ENCODE measurements at regions of chr1 and their contacts with region 1.

Region 1: GRCh38 chr1:66764994-66765578 is 12.8 kb downstream of the DYNLT5 start:
- DNase-seq: no peak
- ATAC-seq: peak; percentile 80
- H3K4me3 ChIP-seq: no peak overlapping the region
- H3K27ac ChIP-seq: no peak overlapping the region
- H3K4me1 ChIP-seq: no peaks in the 10 kb centered on the region
- H3K27me3 ChIP-seq: no peaks in the 10 kb centered on the region
- CTCF ChIP-seq: peak; percentile 50 to 75 (median 69)
- EP300 ChIP-seq: no peak
- POLR2A ChIP-seq: no peak
- RAD21 ChIP-seq: peak; percentile 85

Region 2: DNA sequence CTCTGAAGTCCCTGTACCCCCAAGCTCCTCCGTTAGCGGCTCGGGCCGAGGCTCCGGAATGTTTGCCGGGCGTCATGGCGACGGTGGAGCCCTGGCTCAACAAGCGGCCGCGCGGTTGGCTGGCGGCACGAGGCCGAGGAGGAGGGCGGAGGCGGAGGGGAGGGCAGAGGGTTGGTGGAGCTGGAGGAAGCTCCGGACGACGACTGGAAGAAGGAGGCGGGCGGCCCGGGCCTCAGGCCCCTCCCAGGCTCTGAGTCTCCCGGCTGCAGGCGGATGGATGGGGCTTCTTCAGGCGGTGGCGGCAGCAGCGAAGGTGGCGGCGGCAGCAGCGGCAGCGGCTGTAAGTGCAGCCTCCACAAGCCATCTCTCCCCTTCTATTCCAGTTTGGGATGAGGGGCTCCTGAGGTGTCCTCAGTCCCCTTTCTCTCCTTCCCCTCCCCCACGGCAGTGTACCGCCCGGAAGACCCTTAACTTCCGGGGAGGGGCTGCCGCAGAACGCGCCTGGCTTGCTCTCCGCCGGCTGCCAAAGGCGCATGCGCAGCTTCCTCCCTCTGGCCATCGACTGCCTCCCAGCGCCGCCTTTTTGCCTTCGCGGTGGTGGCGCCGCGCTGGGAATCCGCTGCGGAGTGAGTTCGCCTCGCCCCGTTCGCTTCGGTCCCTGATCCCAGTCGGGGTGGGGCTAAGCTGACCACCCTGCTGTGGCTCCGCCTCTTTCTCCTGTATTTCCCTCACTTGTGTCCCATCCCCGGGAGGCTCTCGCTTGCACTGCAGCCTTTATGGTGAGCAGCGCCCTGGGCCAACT is 159.9 kb after region 1 on chr1 and contains the starts of genes DNAI4 and MIER1:
- CTCF ChIA-PET with region 1: interaction called, 4 read pairs
- POLR2A ChIA-PET with region 1: no interaction called
- RAD21 ChIA-PET with region 1: no interaction called
- SMC1A ChIA-PET with region 1: no interaction called
- in situ Hi-C with region 1: no loop called
- intact Hi-C with region 1: loop called (anchors 5 kb)
- DNase-seq: peak; percentile 87
- ATAC-seq: peak; percentile 96
- H3K4me3 ChIP-seq: peak within 1 kb of the TSS; percentile 79
- H3K27ac ChIP-seq: peak within 1 kb of the TSS; percentile 83
- H3K4me1 ChIP-seq: peaks cover 10% of the 10 kb centered on the region; the same call in 1 of the 2 replicates
- H3K27me3 ChIP-seq: no peaks in the 10 kb centered on the region
- CTCF ChIP-seq: peak; percentile 14 to 30 (median 21); a peak in 3 of 6 replicates
- EP300 ChIP-seq: no peak
- POLR2A ChIP-seq: peak; percentile 85
- RAD21 ChIP-seq: no peak
- polyA plus RNA-seq, gene DNAI4: 0.15 to 0.21 TPM
- polyA plus RNA-seq, gene MIER1: 16.1 to 24.6 TPM

Region 3: GRCh38 chr1:66996018-66996682 is 231.1 kb after region 1 on chr1:
- CTCF ChIA-PET with region 1: interaction called, 26 read pairs
- POLR2A ChIA-PET with region 1: no interaction called
- RAD21 ChIA-PET with region 1: interaction called, 7 read pairs
- SMC1A ChIA-PET with region 1: interaction called, 10 read pairs
- in situ Hi-C with region 1: no loop called
- intact Hi-C with region 1: no loop called
- DNase-seq: peak; percentile 59
- ATAC-seq: peak; percentile 89
- H3K4me3 ChIP-seq: no peak overlapping the region
- H3K27ac ChIP-seq: no peak overlapping the region
- H3K4me1 ChIP-seq: no peaks in the 10 kb centered on the region
- H3K27me3 ChIP-seq: no peaks in the 10 kb centered on the region
- CTCF ChIP-seq: peak; percentile 76 to 85 (median 81)
- EP300 ChIP-seq: no peak
- POLR2A ChIP-seq: no peak
- RAD21 ChIP-seq: peak; percentile 94

Region 4: DNA sequence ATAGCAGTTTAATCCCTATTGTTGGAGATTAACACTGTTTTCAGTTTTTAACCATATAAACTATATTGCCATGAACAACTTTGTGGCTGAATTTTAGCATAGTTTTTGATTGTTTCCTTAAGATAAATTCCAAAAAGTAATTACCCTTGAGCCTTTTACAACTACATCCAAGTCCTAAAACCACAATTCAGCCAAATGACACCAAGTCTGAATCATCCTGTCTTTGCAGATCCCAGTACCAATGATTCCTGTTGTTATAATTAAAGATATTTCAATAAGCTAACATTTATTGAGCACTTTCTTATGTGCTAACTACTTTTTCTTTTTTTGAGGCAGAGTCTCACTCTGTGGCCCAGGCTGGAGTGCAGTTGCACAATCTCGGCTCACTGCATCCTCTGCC is 436.8 kb after region 1 on chr1:
- CTCF ChIA-PET with region 1: no interaction called
- POLR2A ChIA-PET with region 1: interaction called, 11 read pairs
- RAD21 ChIA-PET with region 1: no interaction called
- SMC1A ChIA-PET with region 1: no interaction called
- in situ Hi-C with region 1: no loop called
- intact Hi-C with region 1: no loop called
- DNase-seq: no peak
- ATAC-seq: no peak
- H3K4me3 ChIP-seq: no peak overlapping the region
- H3K27ac ChIP-seq: no peak overlapping the region
- H3K4me1 ChIP-seq: no peaks in the 10 kb centered on the region
- H3K27me3 ChIP-seq: no peaks in the 10 kb centered on the region
- CTCF ChIP-seq: no peak
- EP300 ChIP-seq: no peak
- POLR2A ChIP-seq: no peak
- RAD21 ChIP-seq: no peak

Region 5: DNA sequence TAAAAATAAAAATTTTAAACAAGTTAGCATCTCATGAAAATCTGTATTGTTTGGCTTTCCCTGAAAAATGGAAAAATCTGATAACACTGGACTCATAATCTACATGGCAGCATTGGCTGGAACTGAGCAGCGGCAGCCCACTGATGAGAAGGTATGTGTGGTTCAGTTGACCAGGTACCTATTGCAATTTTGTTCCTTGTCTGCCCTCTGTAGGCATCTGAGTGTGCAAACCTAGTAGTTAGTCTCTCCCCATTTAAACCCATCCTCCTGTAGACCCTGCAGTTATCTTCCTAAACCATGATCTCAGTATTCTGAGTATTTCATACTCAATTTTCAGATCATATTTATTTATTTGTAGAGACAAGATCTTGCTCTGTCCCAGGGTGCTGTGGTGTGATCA is 724.6 kb after region 1 on chr1:
- CTCF ChIA-PET with region 1: no interaction called
- POLR2A ChIA-PET with region 1: no interaction called
- RAD21 ChIA-PET with region 1: no interaction called
- SMC1A ChIA-PET with region 1: no interaction called
- in situ Hi-C with region 1: loop called (anchors 25 kb)
- intact Hi-C with region 1: no loop called
- DNase-seq: peak; percentile 0
- ATAC-seq: peak; percentile 81
- H3K4me3 ChIP-seq: no peak overlapping the region
- H3K27ac ChIP-seq: no peak overlapping the region
- H3K4me1 ChIP-seq: no peaks in the 10 kb centered on the region
- H3K27me3 ChIP-seq: no peaks in the 10 kb centered on the region
- CTCF ChIP-seq: peak; percentile 36 to 51 (median 36); a peak in 4 of 6 replicates
- EP300 ChIP-seq: no peak
- POLR2A ChIP-seq: no peak
- RAD21 ChIP-seq: peak; percentile 58